ENCODE measurements at regions of chr17 and their contacts with region 1.

Region 1: DNA sequence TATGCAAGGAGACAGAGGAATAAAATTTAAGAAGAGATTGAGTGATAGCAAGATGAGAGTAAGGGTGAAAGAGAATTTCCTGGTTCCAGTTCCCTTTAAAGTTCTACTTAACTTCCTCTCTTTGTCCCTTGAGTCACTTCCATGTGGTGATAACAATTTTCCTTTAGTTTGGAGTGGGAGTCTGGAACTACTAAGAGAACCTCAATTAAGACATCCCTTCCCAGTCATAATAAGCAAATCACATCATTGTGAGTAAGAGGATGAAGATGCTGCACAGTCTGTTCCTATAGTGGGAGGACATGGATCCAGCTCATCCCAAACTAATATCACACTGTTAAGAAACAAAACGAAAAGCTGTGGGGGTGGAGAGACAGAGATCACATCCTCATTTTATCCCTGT is 24.4 kb downstream of the TBX21 start:
- DNase-seq: no peak
- ATAC-seq: no peak
- H3K4me3 Mint-ChIP-seq: no peak overlapping the region
- H3K27ac Mint-ChIP-seq: no peak overlapping the region
- H3K4me1 Mint-ChIP-seq: no peaks in the 10 kb centered on the region
- H3K27me3 Mint-ChIP-seq: peaks cover 7% of the 10 kb centered on the region
- CTCF ChIP-seq: no peak

Region 2: DNA sequence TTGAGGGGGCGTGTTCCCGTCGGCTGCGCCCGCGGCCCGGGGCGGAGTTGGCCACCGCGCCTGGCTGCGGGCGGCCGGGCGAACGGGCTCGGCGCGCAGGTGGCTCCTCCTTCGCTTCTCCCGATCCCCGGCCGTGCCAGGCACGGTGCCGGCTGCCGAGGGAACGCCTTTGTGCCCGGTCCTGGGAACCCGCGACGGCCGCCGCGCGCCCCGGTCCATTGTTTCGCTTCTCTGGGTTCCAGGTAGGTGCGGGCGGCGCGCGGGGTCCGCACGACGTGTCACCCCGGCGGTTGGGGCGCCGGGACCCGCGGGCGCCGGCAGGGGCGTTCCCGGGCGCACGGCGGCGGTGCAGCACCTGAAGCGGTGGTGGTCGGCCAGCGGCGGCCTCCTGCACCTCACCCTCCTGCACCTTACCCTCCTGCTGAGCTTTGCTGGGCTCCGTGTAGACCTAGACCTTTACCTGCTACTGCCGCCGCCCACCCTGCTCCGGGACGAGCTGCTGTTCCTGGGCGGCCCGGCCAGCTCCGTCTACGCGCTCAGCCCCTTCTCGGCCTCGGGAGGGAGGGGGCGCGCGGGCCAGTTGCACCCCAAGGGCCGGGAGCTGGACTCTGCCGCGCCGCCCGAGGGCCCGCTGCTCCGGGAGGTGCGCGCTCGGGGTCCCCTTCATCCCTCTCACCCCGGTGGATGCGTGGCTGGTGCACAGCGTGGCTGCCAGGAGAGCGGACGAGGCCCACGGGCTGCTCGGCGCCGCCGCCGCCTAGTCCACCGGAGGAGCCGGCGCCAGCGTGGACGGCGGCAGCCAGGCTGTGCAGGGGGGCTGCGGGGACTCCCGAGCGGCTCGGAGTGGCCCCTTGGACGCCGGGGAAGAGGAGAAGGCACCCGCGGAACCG is 333.7 kb before region 1 on chr17:
- CTCF ChIA-PET with region 1: no interaction called
- POLR2A ChIA-PET with region 1: no interaction called
- intact Hi-C with region 1: no loop called
- DNase-seq: peak; percentile 20
- ATAC-seq: peak; percentile 37
- H3K4me3 Mint-ChIP-seq: peak overlapping the region; percentile 52
- H3K27ac Mint-ChIP-seq: no peak overlapping the region
- H3K4me1 Mint-ChIP-seq: peaks cover 2% of the 10 kb centered on the region
- H3K27me3 Mint-ChIP-seq: peaks cover 10% of the 10 kb centered on the region
- CTCF ChIP-seq: no peak

Region 3: GRCh38 chr17:47810205-47810821 is 52.9 kb after region 1 on chr17:
- CTCF ChIA-PET with region 1: no interaction called
- POLR2A ChIA-PET with region 1: no interaction called
- intact Hi-C with region 1: no loop called
- DNase-seq: no peak
- ATAC-seq: peak; percentile 21
- H3K4me3 Mint-ChIP-seq: no peak overlapping the region
- H3K27ac Mint-ChIP-seq: no peak overlapping the region
- H3K4me1 Mint-ChIP-seq: no peaks in the 10 kb centered on the region
- H3K27me3 Mint-ChIP-seq: no peaks in the 10 kb centered on the region
- CTCF ChIP-seq: no peak

Region 4: DNA sequence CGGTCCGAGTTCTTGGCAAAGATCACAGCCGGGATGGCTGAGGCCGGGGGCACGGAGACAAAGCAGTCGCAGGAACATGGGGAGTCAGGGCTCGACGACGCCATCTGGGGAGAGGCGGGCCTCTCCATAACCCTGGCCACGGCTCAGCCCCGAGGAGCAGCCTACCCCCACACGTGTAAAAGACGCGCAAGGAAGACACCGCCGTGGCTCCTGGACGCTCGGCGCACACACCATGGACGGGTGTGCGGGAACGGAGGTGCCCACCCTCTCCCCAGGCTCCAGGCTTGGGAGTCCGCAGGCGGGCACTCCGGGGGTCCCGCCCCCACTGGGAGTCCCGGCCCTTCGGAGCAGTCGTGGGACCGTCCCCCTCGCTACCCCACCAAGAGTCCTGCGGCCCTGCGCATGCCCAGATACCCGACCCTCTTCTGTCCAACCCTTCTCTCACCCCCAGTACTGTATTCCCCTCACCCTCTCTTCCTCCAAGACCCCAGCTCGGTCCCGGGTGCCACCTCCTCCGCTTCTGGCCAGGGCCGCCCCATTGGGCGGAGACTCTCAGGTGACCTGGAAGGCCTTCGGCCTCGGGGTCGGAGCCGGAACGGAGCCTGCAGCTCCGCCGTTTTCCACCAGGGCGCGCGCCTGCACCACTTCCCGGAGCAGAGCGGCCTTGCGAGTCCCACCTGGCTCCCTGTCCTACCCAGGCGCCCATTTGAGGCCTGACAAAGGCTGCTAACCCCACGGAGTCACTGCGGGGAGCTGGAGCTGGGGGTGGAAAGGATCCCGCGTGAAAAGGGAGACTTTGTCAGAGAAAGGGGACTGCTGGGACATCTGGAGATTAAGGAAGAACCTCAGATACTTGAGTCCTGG is 83.6 kb after region 1 on chr17 and contains the start of gene SCRN2:
- CTCF ChIA-PET with region 1: no interaction called
- POLR2A ChIA-PET with region 1: no interaction called
- intact Hi-C with region 1: no loop called
- DNase-seq: peak; percentile 91
- ATAC-seq: peak; percentile 94
- H3K4me3 Mint-ChIP-seq: peak within 1 kb of the TSS; percentile 98
- H3K27ac Mint-ChIP-seq: peak within 1 kb of the TSS; percentile 79
- H3K4me1 Mint-ChIP-seq: peaks cover 23% of the 10 kb centered on the region
- H3K27me3 Mint-ChIP-seq: peaks cover 16% of the 10 kb centered on the region
- CTCF ChIP-seq: peak; percentile 61
- total RNA-seq, gene SCRN2: 32.1 and 36.3 TPM in 2 replicates

Region 5: DNA sequence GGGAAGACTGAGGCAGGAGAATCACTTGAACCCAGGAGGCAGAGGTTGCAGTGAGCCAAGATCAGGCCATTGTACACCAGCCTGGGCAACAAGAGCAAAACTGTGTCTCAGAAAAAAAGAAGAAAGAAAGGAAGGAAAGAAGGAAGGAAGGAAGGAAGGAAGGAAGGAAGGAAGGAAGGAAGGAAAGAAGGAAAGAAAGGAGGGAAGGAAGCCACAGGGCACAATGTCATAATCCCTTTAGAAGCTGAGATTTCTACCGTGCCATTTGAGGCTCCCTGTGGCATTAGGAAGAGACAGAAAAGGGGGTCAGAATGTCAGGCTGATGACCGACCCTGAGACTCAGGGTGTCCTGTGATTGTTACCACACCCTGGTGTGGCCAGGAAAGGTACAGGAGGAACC is 1446.4 kb after region 1 on chr17:
- CTCF ChIA-PET with region 1: no interaction called
- POLR2A ChIA-PET with region 1: interaction called, 19 read pairs
- intact Hi-C with region 1: no loop called
- DNase-seq: no peak
- ATAC-seq: no peak
- H3K4me3 Mint-ChIP-seq: no peak overlapping the region
- H3K27ac Mint-ChIP-seq: no peak overlapping the region
- H3K4me1 Mint-ChIP-seq: peaks cover 2% of the 10 kb centered on the region
- H3K27me3 Mint-ChIP-seq: no peaks in the 10 kb centered on the region
- CTCF ChIP-seq: no peak